Ascending aorta (tissue), 2 donors: ENCODE measurements at regions of chr10 and their contacts with region 1.

Region 1: GRCh38 chr10:784403-785088 is 95.1 kb upstream of the DIP2C start:
- DNase-seq: peak in 1 of 2 donors; percentile 84
- H3K4me3 ChIP-seq: peak overlapping the region; percentile 42 to 64
- H3K27ac ChIP-seq: no peak overlapping the region
- H3K4me1 ChIP-seq: peaks cover 2 to 3% of the 10 kb centered on the region in 2 donors
- H3K27me3 ChIP-seq: no peaks in the 10 kb centered on the region
- CTCF ChIP-seq: peak in 2 of 3 experiments; percentile 28 to 39

Region 2: GRCh38 chr10:178208-178607 is 606.3 kb before region 1 on chr10:
- intact Hi-C with region 1: loop called (anchors 5 kb)
- DNase-seq: no peak
- H3K4me3 ChIP-seq: no peak overlapping the region
- H3K27ac ChIP-seq: no peak overlapping the region
- H3K4me1 ChIP-seq: peaks cover 0 to 2% of the 10 kb centered on the region in 2 donors
- H3K27me3 ChIP-seq: no peaks in the 10 kb centered on the region
- CTCF ChIP-seq: peak in 1 of 3 experiments; percentile 47

Region 3: DNA sequence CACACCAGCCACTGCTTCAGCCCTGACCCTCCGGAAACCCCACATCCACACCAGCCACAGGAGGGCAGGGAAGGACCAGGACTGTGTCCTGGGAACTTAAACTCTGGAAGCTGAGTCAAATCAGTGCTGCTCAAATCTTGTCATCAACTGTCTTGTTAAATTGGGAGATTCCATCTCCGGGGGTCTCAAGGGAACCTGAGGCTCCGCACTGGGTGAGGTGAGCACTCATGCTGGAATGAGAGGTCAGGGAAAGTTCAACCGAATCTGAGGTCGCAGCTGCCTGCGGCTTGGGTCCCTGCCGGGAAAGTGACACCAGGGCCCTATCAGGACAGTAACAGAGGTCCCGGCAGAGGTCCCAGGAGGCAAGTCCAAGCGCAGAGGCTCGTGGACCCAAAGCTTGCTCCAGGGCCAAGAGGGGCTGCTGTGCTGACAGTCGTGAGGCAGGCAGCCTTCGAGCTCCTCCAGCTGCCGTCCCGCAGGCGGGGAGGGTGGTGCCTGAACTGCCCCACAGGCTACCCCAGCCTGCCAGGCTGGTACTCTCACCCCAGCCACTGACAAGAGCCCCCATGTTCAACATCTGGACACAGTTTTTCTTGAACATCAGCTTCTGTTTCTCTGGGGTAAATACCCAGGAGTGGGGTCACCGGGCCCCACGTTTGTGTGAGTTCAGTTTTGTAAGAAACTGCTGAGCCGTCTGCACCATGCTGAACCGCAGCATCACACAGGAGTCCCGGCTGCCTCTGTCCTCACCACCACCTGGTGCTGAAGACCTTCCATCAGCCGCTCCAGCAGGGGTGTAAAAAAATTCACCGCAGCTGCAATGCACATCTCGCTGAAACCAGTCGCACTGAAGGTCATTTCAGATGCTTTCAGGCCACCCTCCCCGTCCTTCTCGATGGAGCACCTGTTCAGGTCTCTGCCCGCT is 196.0 kb before region 1 on chr10:
- intact Hi-C with region 1: loop called (anchors 2 kb)
- DNase-seq: peak in 1 of 2 donors; percentile 41
- H3K4me3 ChIP-seq: no peak overlapping the region
- H3K27ac ChIP-seq: no peak overlapping the region
- H3K4me1 ChIP-seq: peaks cover 0 to 11% of the 10 kb centered on the region in 2 donors
- H3K27me3 ChIP-seq: no peaks in the 10 kb centered on the region
- CTCF ChIP-seq: peak in 1 of 3 experiments; percentile 33

Region 4: DNA sequence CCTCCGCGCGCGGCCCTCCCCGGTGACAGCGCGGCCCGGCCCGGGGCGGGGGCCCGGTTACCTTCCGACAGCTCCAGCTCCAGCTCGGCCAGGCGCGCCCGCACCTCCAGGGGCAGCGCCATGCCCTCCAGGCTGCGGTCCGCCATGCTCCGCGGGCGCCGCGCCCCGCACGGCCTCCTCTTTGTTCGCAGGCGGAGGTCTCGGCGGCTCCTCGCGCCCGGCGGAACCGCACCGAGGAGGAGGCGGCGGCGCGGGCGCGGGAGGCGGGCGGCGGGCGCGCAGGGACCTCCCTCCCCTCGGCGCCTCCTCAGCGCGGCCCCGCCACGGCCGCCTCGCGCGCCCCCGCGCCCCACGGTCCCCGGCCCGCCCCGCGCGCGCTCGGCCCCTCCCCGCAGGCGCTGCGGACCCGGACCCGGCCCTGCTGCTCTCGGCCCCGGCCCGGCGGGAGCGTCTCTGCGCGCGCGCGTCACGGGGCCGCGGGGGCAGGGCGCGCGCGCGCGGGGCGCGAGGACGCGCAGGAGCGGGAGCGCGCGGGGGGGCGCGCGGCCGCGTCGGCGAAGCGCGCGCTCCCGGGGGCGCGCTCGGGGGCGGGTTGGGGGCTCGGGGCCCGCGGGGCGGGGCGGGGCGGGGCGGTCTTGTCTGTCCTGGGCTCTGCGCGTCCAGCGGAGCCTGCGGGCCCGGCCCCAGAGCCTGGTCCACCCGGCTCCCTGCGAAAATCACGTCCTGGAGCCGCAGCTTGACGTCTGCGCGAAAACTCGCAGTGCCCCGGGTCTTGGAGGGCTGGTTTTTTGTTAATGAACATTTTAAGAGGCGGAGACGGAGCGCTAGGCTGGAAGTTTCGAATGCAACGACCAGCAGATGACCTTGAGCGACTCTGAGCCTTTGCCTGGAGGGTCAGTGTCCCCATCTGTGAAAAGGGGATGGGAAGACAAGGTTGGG is 94.8 kb before region 1 on chr10 and contains the start of gene DIP2C:
- intact Hi-C with region 1: loop called (anchors 2 kb)
- DNase-seq: peak in 1 of 2 donors; percentile 83
- H3K4me3 ChIP-seq: peak within 1 kb of the TSS; percentile 67 to 89
- H3K27ac ChIP-seq: peak within 1 kb of the TSS; percentile 89 to 91
- H3K4me1 ChIP-seq: peaks cover 6 to 11% of the 10 kb centered on the region in 2 donors
- H3K27me3 ChIP-seq: no peaks in the 10 kb centered on the region
- CTCF ChIP-seq: no peak
- total RNA-seq, gene DIP2C: 14.7 TPM